SK-N-SH (cell line): ENCODE measurements at regions of chr7 and their contacts with region 1.

Region 1: DNA sequence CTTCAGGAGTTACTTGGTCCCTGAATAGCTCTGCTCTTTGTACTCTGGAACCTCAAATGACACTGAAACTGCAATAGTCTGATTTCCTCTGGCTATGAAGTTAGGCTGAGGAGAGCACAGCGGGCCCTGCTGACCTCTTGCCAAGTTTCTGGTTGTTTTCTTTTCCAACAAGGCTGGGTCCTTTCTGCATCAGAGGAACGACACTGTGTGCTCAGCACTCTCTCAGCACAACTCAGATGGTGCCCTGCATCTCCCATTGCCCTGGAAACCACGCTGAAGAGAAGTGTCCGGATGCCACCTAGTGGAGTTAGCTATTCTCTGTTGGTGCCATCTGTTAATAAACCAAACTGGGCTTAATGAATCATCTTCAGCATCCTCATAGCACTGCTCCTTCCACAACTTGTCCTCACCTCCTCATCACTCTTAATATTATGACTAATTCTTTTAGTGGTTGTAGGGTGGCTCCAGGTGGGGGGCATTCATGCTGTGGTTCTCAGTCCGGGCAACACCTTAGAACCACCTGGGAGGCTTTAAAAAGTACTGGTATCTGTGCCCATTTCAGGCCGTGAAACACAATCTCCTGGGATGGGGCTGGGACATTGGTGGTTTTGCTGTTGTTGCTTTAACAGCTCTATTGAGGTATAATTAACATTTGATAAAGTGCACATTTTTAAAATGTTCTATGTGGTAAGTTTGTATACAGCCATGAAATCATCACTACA is 8.2 kb upstream of the EFCAB10 start:
- DNase-seq: peak; percentile 88
- H3K4me3 ChIP-seq: no peak overlapping the region
- H3K27ac ChIP-seq: no peak overlapping the region
- H3K4me1 ChIP-seq: peaks cover 0 to 6% of the 10 kb centered on the region in 2 experiments; a peak in 1 of 4 replicates
- H3K27me3 ChIP-seq: no peaks in the 10 kb centered on the region
- CTCF ChIP-seq: peak; percentile 95
- EP300 ChIP-seq: no peak
- RAD21 ChIP-seq: peak; percentile 99

Region 2: DNA sequence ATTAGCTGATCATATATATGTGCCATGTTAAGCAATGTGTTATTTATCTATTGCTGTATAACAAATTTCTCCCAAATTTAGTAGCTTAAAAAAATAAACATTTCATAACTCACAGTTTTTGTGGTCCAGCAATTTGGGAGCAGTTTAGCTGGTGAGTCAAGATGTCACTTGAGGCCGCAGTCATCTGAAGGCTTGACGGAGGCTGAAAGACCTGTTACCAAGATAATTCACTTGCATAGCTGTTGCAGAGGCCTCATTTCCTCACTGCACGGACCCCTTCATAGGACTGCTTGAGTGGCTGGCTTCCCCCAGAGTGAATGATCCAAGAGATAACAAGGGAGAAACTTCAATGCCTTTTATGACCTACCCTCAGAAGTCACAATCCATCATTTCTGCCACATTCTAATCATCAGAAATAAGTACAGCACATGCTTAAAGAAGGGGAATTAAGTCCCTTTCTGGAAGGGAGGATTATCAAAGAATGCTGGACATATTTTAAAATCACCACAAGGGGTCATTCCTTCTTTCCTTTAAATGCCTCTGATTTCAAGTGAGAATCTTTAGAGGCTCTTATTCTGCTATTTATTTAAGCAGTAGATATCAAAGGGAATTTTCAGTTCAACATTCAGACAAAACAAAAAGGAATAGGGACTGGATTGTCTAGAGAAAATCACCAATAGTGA is 190.3 kb before region 1 on chr7:
- CTCF ChIA-PET with region 1: interaction called, 30 read pairs
- POLR2A ChIA-PET with region 1: no interaction called
- DNase-seq: peak; percentile 51
- H3K4me3 ChIP-seq: no peak overlapping the region
- H3K27ac ChIP-seq: no peak overlapping the region
- H3K4me1 ChIP-seq: no peaks in the 10 kb centered on the region; a peak in 2 of 4 replicates
- H3K27me3 ChIP-seq: no peaks in the 10 kb centered on the region
- CTCF ChIP-seq: peak; percentile 70
- EP300 ChIP-seq: no peak
- RAD21 ChIP-seq: peak; percentile 69

Region 3: DNA sequence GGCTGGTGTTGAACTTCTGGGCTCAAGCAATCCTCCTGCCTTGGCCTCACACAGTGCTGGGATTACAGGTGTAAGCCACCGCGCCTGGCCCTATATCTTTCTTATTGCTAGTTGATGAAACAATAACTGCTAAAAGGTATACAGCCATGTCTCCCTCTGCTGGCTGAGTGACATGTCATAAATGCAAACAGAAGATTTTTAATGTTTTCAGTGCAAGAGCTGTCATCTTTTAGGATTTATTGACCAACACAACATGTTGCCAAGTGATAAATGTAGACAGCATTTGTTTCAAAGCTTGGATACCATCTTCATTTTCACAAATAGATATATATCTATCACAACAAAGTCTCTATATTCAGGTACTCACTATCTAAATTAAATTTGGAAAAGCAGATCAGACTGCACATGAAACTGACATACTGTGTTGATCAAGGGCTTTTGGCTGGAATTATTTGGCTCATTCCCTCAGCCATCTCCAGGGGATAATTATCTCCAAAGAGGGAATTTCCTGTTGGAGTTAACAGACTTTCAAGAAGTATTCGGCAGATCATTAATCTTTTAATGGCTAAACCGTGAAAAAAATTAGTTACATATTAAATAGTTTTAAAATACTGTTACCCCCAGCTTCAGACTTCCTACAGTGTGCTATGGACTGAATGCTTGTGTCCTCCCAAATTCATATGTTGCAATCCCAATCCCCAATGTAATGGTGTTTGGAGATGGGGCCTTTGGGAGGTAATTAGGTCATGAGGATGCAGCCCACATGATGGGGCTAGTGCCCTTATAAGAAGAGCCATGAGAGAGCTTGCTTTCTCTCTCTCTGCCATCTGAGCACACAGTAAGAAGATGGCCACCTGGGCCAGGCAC is 159.5 kb before region 1 on chr7:
- CTCF ChIA-PET with region 1: interaction called, 14 read pairs
- POLR2A ChIA-PET with region 1: no interaction called
- DNase-seq: peak; percentile 55
- H3K4me3 ChIP-seq: no peak overlapping the region
- H3K27ac ChIP-seq: no peak overlapping the region; a peak in 1 of 4 replicates
- H3K4me1 ChIP-seq: no peaks in the 10 kb centered on the region
- H3K27me3 ChIP-seq: no peaks in the 10 kb centered on the region
- CTCF ChIP-seq: peak; percentile 72
- EP300 ChIP-seq: no peak
- RAD21 ChIP-seq: peak; percentile 74

Region 4: DNA sequence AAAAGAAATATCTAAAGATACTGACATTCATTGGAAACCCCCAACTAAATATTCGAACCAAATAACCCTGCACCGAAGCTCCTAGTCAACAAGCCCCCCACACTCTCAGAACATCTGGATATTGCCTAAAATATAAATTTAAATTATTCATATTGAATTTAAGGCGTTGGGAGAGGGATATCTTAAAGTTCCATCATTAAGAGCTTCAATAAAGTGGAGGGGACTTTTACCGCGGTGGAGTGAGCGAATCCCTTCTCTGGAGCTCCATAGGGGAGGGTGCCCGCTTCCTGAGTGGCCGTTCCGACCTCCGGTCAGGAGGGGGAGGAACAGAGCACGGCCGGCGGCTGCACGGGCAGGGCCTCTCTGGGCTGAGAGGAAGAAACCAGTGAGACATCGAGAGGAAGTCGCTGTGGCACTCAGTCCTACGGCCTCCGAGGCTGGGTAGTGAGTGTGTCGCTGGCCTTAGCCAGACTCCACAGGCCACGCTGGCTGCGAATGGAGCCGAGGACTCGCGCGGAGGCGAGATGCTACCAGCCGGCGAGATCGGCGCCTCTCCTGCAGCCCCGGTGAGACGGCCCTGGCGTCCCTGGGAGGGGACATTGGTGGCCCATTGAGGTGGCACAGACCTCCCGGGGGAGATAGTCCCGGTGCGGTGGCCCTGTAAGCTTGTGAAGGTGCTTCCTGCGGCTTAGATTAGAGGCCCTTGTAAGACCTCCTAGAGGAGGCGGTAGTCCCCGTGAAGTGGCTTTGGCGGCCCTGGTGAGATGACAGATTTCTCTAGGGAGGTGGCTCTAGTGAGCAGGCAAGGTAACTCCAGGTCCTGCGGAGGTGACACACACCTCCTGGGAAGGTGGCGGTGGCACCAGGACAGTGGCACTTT is 57.5 kb before region 1 on chr7 and contains the start of gene RINT1:
- CTCF ChIA-PET with region 1: interaction called, 16 read pairs
- POLR2A ChIA-PET with region 1: interaction called, 3 read pairs
- DNase-seq: peak; percentile 95
- H3K4me3 ChIP-seq: peak within 1 kb of the TSS; percentile 76 to 99
- H3K27ac ChIP-seq: peak within 1 kb of the TSS; percentile 69 to 75; a peak in 3 of 4 replicates
- H3K4me1 ChIP-seq: peaks cover 4 to 7% of the 10 kb centered on the region in 2 experiments; a peak in 2 of 4 replicates
- H3K27me3 ChIP-seq: no peaks in the 10 kb centered on the region
- CTCF ChIP-seq: peak; percentile 91
- EP300 ChIP-seq: peak in 1 of 2 experiments; percentile 50; a peak in 1 of 4 replicates
- RAD21 ChIP-seq: peak; percentile 35
- polyA plus RNA-seq, gene RINT1: 13.1 and 19.1 TPM in 2 replicates

Region 5: DNA sequence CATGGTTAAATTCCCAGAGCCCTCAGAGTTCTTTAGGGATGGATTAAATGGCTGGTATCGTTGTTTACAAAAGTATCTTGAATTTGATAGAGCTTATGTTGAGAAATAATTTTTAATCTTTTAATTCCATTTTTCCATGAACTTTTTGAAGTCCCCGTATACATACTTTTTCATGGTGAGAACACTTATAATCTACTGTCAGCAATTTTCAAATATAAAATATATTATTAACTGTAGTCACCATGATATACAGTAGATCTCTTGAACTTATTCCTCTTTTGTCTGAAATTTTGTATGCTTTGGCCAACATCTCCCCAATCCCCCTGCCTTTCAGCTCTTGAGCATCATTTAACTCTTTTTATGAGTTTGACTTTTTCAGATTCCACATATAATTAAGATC is 17.6 kb before region 1 on chr7:
- CTCF ChIA-PET with region 1: interaction called, 14 read pairs
- POLR2A ChIA-PET with region 1: no interaction called
- DNase-seq: no peak
- H3K4me3 ChIP-seq: no peak overlapping the region
- H3K27ac ChIP-seq: no peak overlapping the region
- H3K4me1 ChIP-seq: no peaks in the 10 kb centered on the region
- H3K27me3 ChIP-seq: no peaks in the 10 kb centered on the region
- CTCF ChIP-seq: no peak
- EP300 ChIP-seq: no peak
- RAD21 ChIP-seq: no peak

Region 6: DNA sequence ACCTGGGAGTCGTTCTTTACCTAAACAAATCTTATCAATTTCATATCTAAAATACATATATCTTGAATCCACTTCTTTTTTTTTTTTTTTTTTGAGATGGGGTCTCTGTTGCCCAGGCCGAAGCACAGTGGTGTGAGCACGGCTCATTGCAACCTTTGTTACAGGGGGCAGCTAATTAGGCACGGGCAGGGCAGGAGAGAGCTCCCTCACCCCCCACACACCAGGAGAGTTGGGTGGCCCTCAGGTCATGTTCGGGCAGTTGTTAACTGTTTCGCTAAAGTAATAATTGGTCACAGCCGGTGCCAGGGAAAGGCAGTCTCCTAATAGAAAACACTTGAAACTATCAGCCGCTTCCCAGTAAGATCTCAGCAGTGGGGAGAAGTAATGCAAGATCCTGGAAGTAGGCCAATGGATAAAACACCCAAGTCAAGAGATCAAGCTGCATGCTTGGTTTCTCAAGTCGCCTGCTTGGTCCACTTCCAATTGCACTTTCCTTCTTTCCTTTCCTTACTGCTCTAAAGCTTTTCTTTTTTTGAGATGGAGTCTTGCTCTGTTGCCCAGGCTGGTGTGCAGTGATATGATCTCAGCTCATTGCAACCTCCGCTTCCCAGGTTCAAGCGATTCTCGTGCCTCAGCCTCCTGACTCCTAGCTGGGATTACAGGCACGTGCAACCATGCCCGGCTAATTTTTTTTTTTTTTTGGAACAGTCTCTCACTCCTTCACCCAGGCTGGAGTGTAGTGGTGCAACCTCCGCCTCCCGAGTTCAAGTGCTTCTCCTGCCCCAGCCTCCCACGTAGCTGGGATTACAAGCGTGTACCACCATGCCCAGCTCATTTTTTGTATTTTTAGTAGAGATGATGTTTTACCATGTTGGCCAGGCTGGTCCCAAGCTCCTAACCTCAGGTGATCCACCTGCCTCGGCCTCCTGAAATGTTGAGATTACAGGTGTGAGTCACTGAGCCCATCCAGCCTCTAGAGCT is 13.1 kb after region 1 on chr7:
- CTCF ChIA-PET with region 1: interaction called, 22 read pairs
- POLR2A ChIA-PET with region 1: no interaction called
- DNase-seq: no peak
- H3K4me3 ChIP-seq: no peak overlapping the region
- H3K27ac ChIP-seq: no peak overlapping the region
- H3K4me1 ChIP-seq: peaks cover 0 to 2% of the 10 kb centered on the region in 2 experiments; a peak in 1 of 4 replicates
- H3K27me3 ChIP-seq: no peaks in the 10 kb centered on the region
- CTCF ChIP-seq: no peak
- EP300 ChIP-seq: no peak
- RAD21 ChIP-seq: no peak